Heart right ventricle (tissue), 16 donors: ENCODE measurements at regions of chr20 and their contacts with region 1.

Region 1: DNA sequence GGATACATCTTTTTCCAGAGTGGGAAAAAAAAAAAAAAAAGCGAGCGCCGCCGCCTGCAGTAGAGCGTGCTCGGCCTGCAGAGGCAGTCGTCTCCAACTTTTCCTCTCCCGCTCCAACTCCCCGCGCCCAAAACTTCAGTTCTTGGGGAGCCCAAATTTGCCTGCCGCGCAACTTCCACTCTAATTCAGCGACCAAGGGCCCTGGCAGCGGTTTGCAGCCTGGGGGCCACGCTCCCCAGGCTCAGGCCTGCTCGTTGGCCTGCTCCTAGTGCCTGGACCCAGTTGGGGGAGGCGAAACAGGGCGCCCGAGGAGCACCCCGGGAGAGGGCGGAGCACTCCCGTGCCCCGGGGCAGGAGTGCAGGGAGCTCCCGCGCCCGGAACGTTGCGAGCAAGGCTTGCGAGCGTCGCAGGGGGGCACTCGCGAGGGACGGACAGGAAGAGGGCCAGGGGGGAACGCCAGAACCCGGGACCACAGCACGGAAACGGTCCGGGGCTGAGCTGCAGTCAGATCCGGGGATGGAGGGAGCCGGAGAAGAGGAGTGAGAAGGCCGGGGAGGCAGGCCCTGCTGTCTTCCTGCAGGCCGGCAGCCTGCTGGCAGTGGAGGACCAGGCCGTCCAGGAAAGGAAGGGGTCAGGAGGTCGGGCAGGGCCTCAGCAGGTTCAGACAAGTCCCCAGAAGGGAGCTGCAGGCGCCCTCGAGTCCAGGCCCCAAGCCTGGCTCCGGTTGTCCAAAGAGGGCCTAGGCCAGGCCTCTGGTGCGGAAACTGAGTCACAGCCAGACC is at the start of gene STX16:
- DNase-seq: peak; percentile 89 to 92
- ATAC-seq: peak; percentile 94 to 98 (median 97)
- H3K4me3 ChIP-seq: peak within 1 kb of the TSS; percentile 75 to 99 (median 95)
- H3K27ac ChIP-seq: peak within 1 kb of the TSS; percentile 89 to 98 (median 95)
- H3K4me1 ChIP-seq: peaks cover 0 to 55% (median 42%) of the 10 kb centered on the region in 9 donors
- H3K27me3 ChIP-seq: no peaks in the 10 kb centered on the region
- CTCF ChIP-seq: peak in 8 of 9 donors; percentile 38 to 87 (median 64)
- total RNA-seq, gene STX16: 25.3 to 33.9 (median 27.0) TPM

Region 2: DNA sequence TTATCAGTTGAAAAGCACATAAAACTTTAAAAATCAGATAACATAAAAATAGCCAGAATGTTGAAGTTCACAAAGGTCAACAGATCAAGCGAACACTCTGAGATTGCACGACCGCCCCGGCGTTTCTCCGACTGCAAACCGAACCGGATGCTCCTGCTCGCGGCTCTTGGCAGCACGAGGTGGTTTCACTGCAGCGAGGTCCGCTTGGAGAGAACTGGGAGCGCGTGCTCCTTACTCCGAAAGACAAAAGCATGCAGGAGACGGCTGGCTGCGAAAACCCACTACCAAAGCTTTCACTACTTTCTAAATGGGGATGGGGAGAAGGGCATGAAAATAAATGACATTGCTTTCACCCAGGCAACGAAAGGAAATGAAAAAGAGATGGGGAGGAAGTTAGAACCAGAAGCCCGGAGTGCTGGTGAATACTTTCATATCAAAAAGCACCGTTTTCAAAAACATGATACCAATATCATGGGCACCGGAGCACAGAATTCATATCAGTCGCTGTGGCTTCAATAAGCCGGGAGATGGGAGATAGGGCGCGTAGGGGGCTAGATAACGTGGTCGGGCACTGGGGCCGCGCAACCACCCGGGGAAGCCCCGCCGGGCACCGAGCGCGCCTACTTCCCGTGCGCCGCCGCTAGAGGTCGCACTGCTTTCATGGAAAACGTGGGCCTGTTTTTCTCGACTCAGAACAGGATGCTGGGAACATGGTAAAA is 414.2 kb before region 1 on chr20:
- intact Hi-C with region 1: loop called in 9 of 10 experiments (anchors 2 to 10 kb)
- DNase-seq: peak; percentile 62 to 77
- ATAC-seq: peak; percentile 87 to 94 (median 92)
- H3K4me3 ChIP-seq: peak overlapping the region in 9 of 10 donors; percentile 26 to 66 (median 50)
- H3K27ac ChIP-seq: no peak overlapping the region
- H3K4me1 ChIP-seq: peaks cover 0 to 17% (median 5%) of the 10 kb centered on the region in 9 donors
- H3K27me3 ChIP-seq: peaks cover 0 to 7% (median 0%) of the 10 kb centered on the region in 7 donors
- CTCF ChIP-seq: peak; percentile 90 to 98 (median 96)

Region 3: GRCh38 chr20:58309575-58310290 is 341.2 kb before region 1 on chr20 and contains the start of gene RAB22A:
- intact Hi-C with region 1: loop called in 1 of 10 experiments (anchors 1 kb)
- DNase-seq: peak; percentile 77 to 85
- ATAC-seq: peak; percentile 87 to 95 (median 94)
- H3K4me3 ChIP-seq: peak within 1 kb of the TSS; percentile 97 to 100 (median 99)
- H3K27ac ChIP-seq: peak within 1 kb of the TSS; percentile 68 to 96 (median 90)
- H3K4me1 ChIP-seq: peaks cover 0 to 53% (median 18%) of the 10 kb centered on the region in 9 donors
- H3K27me3 ChIP-seq: no peaks in the 10 kb centered on the region
- CTCF ChIP-seq: peak in 1 of 9 donors; percentile 7
- total RNA-seq, gene RAB22A: 5.6 to 8.5 (median 7.1) TPM

Region 4: GRCh38 chr20:58660855-58661596 is 10.1 kb after region 1 on chr20:
- intact Hi-C with region 1: loop called in 1 of 10 experiments (anchors 1 kb)
- DNase-seq: no peak
- ATAC-seq: peak in 2 of 8 donors; percentile 29 to 32
- H3K4me3 ChIP-seq: no peak overlapping the region
- H3K27ac ChIP-seq: peak overlapping the region in 4 of 10 donors; percentile 17 to 75 (median 30)
- H3K4me1 ChIP-seq: peaks cover 3 to 65% (median 57%) of the 10 kb centered on the region in 9 donors
- H3K27me3 ChIP-seq: no peaks in the 10 kb centered on the region
- CTCF ChIP-seq: no peak

Region 5: DNA sequence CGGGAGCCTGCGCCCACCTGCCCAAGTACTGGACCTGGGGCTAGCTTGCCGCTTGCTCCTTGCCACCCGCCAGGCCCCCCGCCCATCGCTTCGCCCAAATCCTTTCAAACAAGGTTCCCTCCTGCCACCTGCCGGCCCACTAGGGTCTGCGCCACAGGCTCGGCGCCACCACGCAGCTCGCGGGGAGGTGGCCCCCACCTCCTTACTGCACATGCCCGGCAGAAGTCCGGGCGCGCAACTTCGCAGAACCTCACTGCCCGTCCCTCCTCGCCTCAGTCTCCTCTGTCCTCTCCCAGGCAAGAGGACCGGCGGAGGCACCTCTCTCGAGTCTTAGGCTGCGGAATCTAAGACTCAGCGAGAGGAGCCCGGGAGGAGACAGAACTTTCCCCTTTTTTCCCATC is 188.5 kb after region 1 on chr20:
- intact Hi-C with region 1: loop called in 2 of 10 experiments (anchors 10 kb)
- DNase-seq: peak; percentile 34 to 43
- ATAC-seq: peak; percentile 55 to 75 (median 72)
- H3K4me3 ChIP-seq: peak overlapping the region in 7 of 10 donors; percentile 3 to 40 (median 25)
- H3K27ac ChIP-seq: no peak overlapping the region
- H3K4me1 ChIP-seq: peaks cover 0 to 14% (median 3%) of the 10 kb centered on the region in 9 donors
- H3K27me3 ChIP-seq: peaks cover 0 to 84% (median 60%) of the 10 kb centered on the region in 7 donors
- CTCF ChIP-seq: peak in 8 of 9 donors; percentile 19 to 62 (median 50)

Region 6: GRCh38 chr20:58993332-58994201 is 342.6 kb after region 1 on chr20:
- intact Hi-C with region 1: loop called in 1 of 10 experiments (anchors 10 kb)
- DNase-seq: no peak
- ATAC-seq: peak in 2 of 8 donors; percentile 15 to 18
- H3K4me3 ChIP-seq: no peak overlapping the region
- H3K27ac ChIP-seq: peak overlapping the region in 1 of 10 donors; percentile 6
- H3K4me1 ChIP-seq: peaks cover 0 to 13% (median 4%) of the 10 kb centered on the region in 9 donors
- H3K27me3 ChIP-seq: no peaks in the 10 kb centered on the region
- CTCF ChIP-seq: no peak

Region 7: GRCh38 chr20:59222253-59223181 is 571.5 kb after region 1 on chr20:
- intact Hi-C with region 1: loop called in 1 of 10 experiments (anchors 10 kb)
- DNase-seq: peak; percentile 77 to 87
- ATAC-seq: peak; percentile 85 to 95 (median 93)
- H3K4me3 ChIP-seq: peak overlapping the region; percentile 22 to 64 (median 60)
- H3K27ac ChIP-seq: peak overlapping the region in 9 of 10 donors; percentile 25 to 84 (median 75)
- H3K4me1 ChIP-seq: peaks cover 9 to 28% (median 21%) of the 10 kb centered on the region in 9 donors
- H3K27me3 ChIP-seq: peaks cover 0 to 52% (median 33%) of the 10 kb centered on the region in 7 donors
- CTCF ChIP-seq: peak; percentile 90 to 99 (median 96)